Activated T-helper 1 cell treated with anti-CD3 and anti-CD28 coated beads, Interleukin-12 subunit alpha, Interleukin-12 subunit beta, Interleukin-2, Interleukin-4 antibody, amounts not matched to agents 30 ng/mL and 10 ng/mL and 1 ng/mL, durations not matched to agents 14 hours and 24 hours and 36 hours (primary cell): ENCODE measurements at regions of chr18 and their contacts with region 1.

Region 1: DNA sequence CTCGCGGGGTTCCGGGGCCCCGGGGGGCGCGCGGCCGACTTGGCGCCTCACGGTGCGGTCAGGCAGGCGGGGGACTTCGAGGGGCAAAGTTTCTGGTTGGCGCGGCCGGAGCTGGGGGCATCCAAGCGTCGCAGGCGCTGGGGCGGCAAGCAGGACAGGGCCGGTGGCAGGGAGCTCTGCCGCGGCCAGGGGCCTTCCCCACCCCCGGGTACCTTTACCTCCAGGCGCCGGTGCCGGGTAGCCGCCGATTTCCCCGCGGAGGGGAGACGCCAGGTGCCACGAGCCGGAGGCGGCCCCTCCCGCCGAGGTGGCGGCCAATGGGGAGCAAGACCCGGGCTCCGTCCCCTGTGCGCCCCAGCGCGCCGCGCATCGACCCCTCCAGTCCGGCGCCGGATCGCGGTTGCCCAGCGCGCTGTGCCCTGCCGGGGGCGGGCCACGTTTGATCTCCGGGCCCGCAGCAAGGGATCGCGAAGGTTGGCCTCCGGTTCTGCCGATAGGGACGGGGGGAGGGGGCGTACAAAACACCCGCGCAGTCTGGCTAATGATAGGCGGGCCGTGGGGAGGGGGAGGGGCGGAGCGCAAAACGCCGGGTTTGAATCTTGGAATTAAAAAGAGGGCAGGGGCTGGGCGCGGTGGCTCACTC is at the start of gene ST8SIA5:
- DNase-seq: no peak
- H3K4me3 Mint-ChIP-seq: peak within 1 kb of the TSS; percentile 68
- H3K27ac Mint-ChIP-seq: no peak within 1 kb of the TSS
- H3K4me1 Mint-ChIP-seq: peaks cover 24% of the 10 kb centered on the region
- H3K27me3 Mint-ChIP-seq: peaks cover 49% of the 10 kb centered on the region
- total RNA-seq, gene ST8SIA5: not detected in 2 replicates

Region 2: GRCh38 chr18:47254341-47254939 is 497.8 kb after region 1 on chr18:
- intact Hi-C with region 1: loop called (anchors 2 kb)
- DNase-seq: peak; percentile 10
- H3K4me3 Mint-ChIP-seq: no peak overlapping the region
- H3K27ac Mint-ChIP-seq: no peak overlapping the region
- H3K4me1 Mint-ChIP-seq: no peaks in the 10 kb centered on the region
- H3K27me3 Mint-ChIP-seq: peaks cover 65% of the 10 kb centered on the region